Sigmoid colon (tissue), 7 donors: ENCODE measurements at regions of chr4 and their contacts with region 1.

Region 1: GRCh38 chr4:41611881-41612871 is 74.2 kb downstream of the LIMCH1 start:
- DNase-seq: peak; percentile 79
- H3K4me3 ChIP-seq: peak overlapping the region in 2 of 4 donors; percentile 41 to 42
- H3K27ac ChIP-seq: peak overlapping the region; percentile 69 to 86 (median 80)
- H3K4me1 ChIP-seq: peaks cover 0 to 51% (median 30%) of the 10 kb centered on the region in 4 donors
- H3K27me3 ChIP-seq: no peaks in the 10 kb centered on the region
- CTCF ChIP-seq: no peak
- EP300 ChIP-seq: no peak
- POLR2A ChIP-seq: no peak

Region 2: DNA sequence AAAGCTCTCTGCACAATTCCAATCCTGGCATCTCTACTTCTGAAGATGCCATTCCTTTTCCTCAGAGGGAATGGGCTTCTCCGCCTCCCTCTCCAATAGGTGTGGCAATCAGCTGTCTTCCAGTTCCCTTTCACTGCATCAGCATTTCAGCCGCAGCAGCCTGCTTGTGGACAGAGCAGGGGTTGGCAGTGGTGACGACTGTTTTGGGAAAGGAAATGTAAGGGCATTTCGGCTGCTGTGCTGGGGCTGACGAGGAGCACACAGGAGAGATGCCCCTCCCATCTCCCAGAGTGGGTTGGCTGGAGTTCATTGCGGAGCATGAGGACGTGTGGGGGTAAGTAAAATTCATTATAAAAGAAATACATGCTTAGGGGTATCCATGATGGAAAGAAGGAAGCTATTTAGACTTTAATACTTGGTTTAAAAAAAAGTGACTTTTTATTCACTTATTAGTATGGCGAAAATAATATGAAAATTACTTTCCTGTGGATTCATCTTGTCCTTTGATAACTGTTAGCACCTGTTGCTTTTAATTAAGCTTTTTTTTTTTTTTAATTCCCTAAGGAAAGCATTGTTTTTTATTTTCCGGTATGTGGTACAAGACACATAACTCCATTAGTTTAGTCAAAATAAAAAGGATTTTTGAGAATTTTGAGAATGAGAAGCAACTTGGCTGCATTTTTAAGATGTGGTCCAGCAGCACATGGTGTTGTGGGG is 74.0 kb before region 1 on chr4 and contains the start of gene LIMCH1:
- intact Hi-C with region 1: loop called (anchors 2 kb)
- DNase-seq: peak; percentile 83
- H3K4me3 ChIP-seq: peak within 1 kb of the TSS in 3 of 4 donors; percentile 8 to 22 (median 12)
- H3K27ac ChIP-seq: peak within 1 kb of the TSS; percentile 59 to 79 (median 76)
- H3K4me1 ChIP-seq: peaks cover 0 to 50% (median 35%) of the 10 kb centered on the region in 4 donors
- H3K27me3 ChIP-seq: no peaks in the 10 kb centered on the region
- CTCF ChIP-seq: no peak
- EP300 ChIP-seq: no peak
- POLR2A ChIP-seq: no peak
- total RNA-seq, gene LIMCH1: 6.7 to 26.0 (median 14.2) TPM

Region 3: DNA sequence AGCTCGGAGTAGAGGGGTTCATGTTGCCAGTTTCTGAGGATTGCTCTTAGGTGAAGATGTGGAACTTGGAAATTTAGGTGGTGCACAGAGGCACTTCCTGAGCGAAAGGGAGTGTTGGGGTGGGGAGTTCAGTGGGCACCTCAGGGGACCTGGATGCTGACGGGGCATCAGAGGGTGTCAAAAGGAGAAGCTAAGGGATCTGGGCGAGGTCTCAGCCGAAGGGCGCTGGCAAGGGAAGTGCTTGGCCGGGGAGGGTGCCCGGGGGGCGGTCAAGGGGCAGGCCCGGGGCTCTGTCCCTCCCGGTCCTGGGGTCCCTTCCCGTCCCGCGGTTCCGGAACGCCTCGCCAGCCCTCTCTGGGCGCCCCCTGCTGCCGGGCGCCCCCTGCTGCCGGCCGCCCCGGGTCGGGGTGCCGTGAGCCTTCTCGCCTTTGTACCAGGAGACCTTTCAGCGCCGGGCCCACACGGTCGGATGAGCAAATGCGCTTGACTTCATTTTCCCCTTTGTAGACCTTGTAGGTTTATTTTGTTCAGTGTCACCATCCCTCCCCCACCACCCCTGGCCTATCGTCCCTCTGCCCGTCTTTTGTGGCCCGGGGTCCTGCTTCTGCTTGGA is 139.4 kb after region 1 on chr4:
- intact Hi-C with region 1: no loop called
- DNase-seq: no peak
- H3K4me3 ChIP-seq: no peak overlapping the region
- H3K27ac ChIP-seq: no peak overlapping the region
- H3K4me1 ChIP-seq: peaks cover 0 to 16% (median 3%) of the 10 kb centered on the region in 4 donors
- H3K27me3 ChIP-seq: peaks cover 32 to 96% (median 55%) of the 10 kb centered on the region in 3 donors
- CTCF ChIP-seq: no peak
- EP300 ChIP-seq: no peak
- POLR2A ChIP-seq: no peak